Testis (tissue), 5 donors: ENCODE measurements at regions of chr2 and their contacts with region 1.

Region 1: GRCh38 chr2:30026087-30027055 is 105.0 kb upstream of the ALK start:
- DNase-seq: peak; percentile 74
- H3K4me3 ChIP-seq: peak overlapping the region; percentile 23 to 34
- H3K27ac ChIP-seq: no peak overlapping the region
- H3K4me1 ChIP-seq: no peaks in the 10 kb centered on the region
- H3K27me3 ChIP-seq: no peaks in the 10 kb centered on the region
- CTCF ChIP-seq: peak in 2 of 3 experiments; percentile 57 to 62
- POLR2A ChIP-seq: no peak

Region 2: GRCh38 chr2:29923110-29923721 is 103.2 kb before region 1 on chr2:
- intact Hi-C with region 1: loop called (anchors 10 kb)
- DNase-seq: peak; percentile 87
- H3K4me3 ChIP-seq: no peak overlapping the region
- H3K27ac ChIP-seq: no peak overlapping the region
- H3K4me1 ChIP-seq: peaks cover 22% of the 10 kb centered on the region
- H3K27me3 ChIP-seq: peaks cover 2% of the 10 kb centered on the region
- CTCF ChIP-seq: peak; percentile 88 to 97 (median 89)
- POLR2A ChIP-seq: no peak